ENCODE measurements at regions of chr1 and their contacts with region 1.

Region 1: DNA sequence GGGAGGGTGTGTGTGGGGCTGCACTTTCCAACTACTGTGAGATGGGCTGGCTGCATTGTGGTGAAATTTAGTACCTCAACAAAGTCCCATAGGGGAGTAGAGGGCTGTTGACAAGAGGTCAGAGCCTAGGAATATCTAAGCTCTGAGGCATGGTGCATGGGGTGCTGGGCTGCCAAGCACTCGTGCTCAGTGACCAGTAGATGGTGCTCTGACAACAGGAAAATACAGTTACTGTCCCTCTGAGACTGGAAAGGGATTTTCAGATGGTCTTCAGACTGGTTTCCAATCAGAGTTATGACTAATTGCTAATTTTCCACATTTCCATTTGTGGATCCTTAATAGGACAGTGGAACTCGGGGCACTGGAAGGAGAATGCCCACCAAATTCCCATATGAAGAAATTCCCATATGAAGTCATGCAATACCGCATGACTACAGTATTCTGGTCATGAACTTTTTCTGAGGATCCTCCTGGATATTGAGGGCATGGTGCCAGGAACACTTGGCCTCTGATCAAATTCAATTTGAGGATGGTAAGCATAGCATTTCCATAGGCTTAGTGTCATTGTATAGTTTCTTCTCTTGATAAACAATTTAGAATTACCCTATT is 4.1 kb upstream of the CACNA1E start:
- DNase-seq: peak; percentile 38
- ATAC-seq: peak; percentile 69
- H3K4me3 Mint-ChIP-seq: no peak overlapping the region
- H3K27ac Mint-ChIP-seq: no peak overlapping the region
- H3K4me1 Mint-ChIP-seq: peaks cover 12% of the 10 kb centered on the region
- H3K27me3 Mint-ChIP-seq: peaks cover 32% of the 10 kb centered on the region
- CTCF ChIP-seq: peak; percentile 68

Region 2: DNA sequence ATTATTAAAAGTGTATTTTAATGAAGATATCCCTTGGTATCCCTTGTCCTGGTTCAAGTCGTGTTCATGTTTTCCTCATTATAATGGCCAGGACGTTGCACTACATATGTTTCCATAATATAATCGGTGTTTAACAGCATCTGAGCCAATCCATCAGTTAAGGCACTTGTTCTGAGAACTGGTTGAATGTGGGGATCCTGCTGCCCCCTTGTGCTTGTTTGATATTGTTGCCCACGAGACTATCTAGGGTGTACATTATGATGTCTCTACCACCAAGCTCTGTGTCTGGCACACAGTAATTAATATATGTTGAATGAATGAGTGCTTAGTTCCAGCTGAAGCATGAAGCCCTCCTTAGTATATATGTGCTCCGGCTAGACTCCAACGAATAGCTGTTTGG is 197.0 kb after region 1 on chr1:
- CTCF ChIA-PET with region 1: interaction called, 9 read pairs
- POLR2A ChIA-PET with region 1: no interaction called
- intact Hi-C with region 1: loop called (anchors 5 kb)
- DNase-seq: peak; percentile 34
- ATAC-seq: no peak
- H3K4me3 Mint-ChIP-seq: no peak overlapping the region
- H3K27ac Mint-ChIP-seq: no peak overlapping the region
- H3K4me1 Mint-ChIP-seq: no peaks in the 10 kb centered on the region
- H3K27me3 Mint-ChIP-seq: peaks cover 15% of the 10 kb centered on the region
- CTCF ChIP-seq: no peak

Region 3: GRCh38 chr1:181778640-181779260 is 299.5 kb after region 1 on chr1:
- CTCF ChIA-PET with region 1: no interaction called
- POLR2A ChIA-PET with region 1: no interaction called
- intact Hi-C with region 1: no loop called
- DNase-seq: no peak
- ATAC-seq: no peak
- H3K4me3 Mint-ChIP-seq: no peak overlapping the region
- H3K27ac Mint-ChIP-seq: no peak overlapping the region
- H3K4me1 Mint-ChIP-seq: no peaks in the 10 kb centered on the region
- H3K27me3 Mint-ChIP-seq: peaks cover 10% of the 10 kb centered on the region
- CTCF ChIP-seq: no peak

Region 4: DNA sequence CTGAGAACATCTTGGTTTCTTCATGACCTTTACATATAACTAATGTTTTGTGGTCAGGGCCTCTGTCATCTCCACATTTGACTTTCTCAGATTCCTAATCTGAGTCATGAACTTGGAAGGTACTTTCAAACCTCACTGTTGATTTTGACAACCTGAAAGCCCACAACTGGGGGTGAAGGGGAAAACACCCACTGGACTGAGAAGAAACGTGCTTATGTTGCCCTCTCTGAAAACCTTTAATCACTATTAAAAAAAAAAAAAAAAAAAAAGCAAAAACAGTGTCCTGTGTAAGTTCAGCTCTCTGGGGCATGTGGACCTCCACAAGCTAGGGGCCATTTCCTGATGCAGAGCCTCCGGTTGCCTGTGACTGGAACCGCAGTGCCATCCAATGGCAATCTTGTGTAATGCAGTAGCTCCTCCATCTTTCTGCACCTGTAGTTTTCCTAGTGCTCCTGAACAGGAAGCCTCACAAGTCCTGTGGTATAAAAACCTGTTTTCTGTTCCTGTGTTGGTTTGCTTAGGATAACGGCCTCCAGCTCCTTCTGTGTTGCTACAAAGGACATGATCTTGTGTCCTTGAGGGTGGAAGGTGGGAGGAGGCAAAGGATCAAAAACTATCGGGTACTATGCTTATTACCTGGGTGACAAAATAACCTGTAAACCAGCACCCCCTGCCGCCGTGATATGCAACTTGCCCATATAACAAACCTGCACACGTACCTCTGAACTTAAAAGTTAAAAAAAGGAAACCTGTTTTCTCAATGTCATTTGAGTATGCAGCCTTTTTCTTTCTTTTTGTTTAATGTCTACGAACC is 457.7 kb after region 1 on chr1:
- CTCF ChIA-PET with region 1: interaction called, 12 read pairs
- POLR2A ChIA-PET with region 1: no interaction called
- intact Hi-C with region 1: loop called (anchors 5 kb)
- DNase-seq: peak; percentile 74
- ATAC-seq: peak; percentile 81
- H3K4me3 Mint-ChIP-seq: no peak overlapping the region
- H3K27ac Mint-ChIP-seq: no peak overlapping the region
- H3K4me1 Mint-ChIP-seq: peaks cover 5% of the 10 kb centered on the region
- H3K27me3 Mint-ChIP-seq: peaks cover 1% of the 10 kb centered on the region
- CTCF ChIP-seq: peak; percentile 64

Region 5: DNA sequence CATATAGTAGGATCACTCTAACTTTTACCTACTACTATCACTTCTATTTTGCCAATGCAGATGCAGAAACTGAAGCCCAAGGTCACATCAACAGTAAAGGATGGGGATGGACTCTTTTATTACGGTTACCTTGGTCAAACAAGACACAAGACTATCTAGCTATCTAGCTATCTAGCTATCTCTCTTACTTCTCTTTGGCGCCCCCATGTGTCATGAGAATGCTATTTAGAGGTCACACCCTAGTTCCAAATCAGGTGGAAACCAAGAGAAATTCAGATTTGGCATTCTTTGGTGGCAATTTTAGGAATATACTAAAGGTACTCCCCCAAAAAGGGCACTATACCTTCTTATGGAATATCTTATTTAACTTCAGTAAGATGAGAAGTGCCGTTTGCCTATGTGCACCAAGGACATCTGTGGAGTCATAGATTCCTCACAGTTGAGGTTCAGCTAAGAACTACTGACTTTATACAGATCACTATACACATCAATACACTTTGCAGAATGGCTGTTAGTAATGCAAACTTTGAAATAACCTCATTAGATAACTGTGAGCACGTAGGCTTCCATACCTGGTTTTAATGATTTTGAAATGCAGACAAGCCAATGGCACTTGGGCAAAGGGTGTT is 575.6 kb after region 1 on chr1:
- CTCF ChIA-PET with region 1: interaction called, 15 read pairs
- POLR2A ChIA-PET with region 1: no interaction called
- intact Hi-C with region 1: no loop called
- DNase-seq: peak; percentile 79
- ATAC-seq: peak; percentile 68
- H3K4me3 Mint-ChIP-seq: no peak overlapping the region
- H3K27ac Mint-ChIP-seq: no peak overlapping the region
- H3K4me1 Mint-ChIP-seq: no peaks in the 10 kb centered on the region
- H3K27me3 Mint-ChIP-seq: peaks cover 22% of the 10 kb centered on the region
- CTCF ChIP-seq: peak; percentile 74

Measured in activated CD8-positive, alpha-beta T cell treated with anti-CD3 and anti-CD28 coated beads for 36 hours (primary cell).